Natural killer cell (primary cell): ENCODE measurements at regions of chr2 and their contacts with region 1.

Region 1: DNA sequence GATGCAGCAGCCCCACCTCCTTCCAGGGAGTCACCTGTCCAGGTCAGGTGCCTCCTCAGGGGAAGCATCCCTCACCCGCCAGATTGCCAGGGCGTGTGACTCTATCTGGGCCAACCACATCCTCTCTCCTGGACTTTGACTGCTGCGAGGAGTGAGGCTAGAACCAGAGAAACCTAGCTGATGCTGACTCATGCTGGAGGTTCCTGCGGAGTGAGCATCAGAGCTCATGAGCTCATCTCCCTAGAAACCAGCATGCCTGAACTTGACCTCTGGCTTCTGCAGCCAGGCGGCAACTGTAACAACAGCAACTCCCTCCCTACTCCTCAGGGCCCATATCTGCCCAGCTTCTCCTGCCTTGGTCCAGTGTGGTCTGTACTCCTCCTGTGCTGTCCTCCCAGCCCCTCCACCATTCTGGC is 28.3 kb upstream of the NT5DC4 start:
- DNase-seq: peak; percentile 44 to 66
- ATAC-seq: peak; percentile 61 to 87 (median 76)
- H3K4me3 ChIP-seq: no peak overlapping the region
- H3K4me3 Mint-ChIP-seq: peak overlapping the region; percentile 35
- H3K27ac ChIP-seq: no peak overlapping the region
- H3K27ac Mint-ChIP-seq: peak overlapping the region; percentile 71 to 89
- H3K4me1 ChIP-seq: peaks cover 27% of the 10 kb centered on the region
- H3K4me1 Mint-ChIP-seq: peaks cover 37% of the 10 kb centered on the region in 2 donors
- H3K27me3 ChIP-seq: no peaks in the 10 kb centered on the region
- H3K27me3 Mint-ChIP-seq: no peaks in the 10 kb centered on the region
- CTCF ChIP-seq: no peak

Region 2: GRCh38 chr2:112626604-112627059 is 65.9 kb before region 1 on chr2:
- intact Hi-C with region 1: loop called (anchors 1 kb)
- DNase-seq: peak; percentile 58 to 84
- ATAC-seq: peak; percentile 35 to 59 (median 51)
- H3K4me3 ChIP-seq: no peak overlapping the region
- H3K4me3 Mint-ChIP-seq: peak overlapping the region; percentile 78
- H3K27ac ChIP-seq: peak overlapping the region; percentile 59
- H3K27ac Mint-ChIP-seq: peak overlapping the region; percentile 90 to 94
- H3K4me1 ChIP-seq: peaks cover 82% of the 10 kb centered on the region
- H3K4me1 Mint-ChIP-seq: peaks cover 80 to 82% of the 10 kb centered on the region in 2 donors
- H3K27me3 ChIP-seq: no peaks in the 10 kb centered on the region
- H3K27me3 Mint-ChIP-seq: no peaks in the 10 kb centered on the region
- CTCF ChIP-seq: peak; percentile 82

Region 3: DNA sequence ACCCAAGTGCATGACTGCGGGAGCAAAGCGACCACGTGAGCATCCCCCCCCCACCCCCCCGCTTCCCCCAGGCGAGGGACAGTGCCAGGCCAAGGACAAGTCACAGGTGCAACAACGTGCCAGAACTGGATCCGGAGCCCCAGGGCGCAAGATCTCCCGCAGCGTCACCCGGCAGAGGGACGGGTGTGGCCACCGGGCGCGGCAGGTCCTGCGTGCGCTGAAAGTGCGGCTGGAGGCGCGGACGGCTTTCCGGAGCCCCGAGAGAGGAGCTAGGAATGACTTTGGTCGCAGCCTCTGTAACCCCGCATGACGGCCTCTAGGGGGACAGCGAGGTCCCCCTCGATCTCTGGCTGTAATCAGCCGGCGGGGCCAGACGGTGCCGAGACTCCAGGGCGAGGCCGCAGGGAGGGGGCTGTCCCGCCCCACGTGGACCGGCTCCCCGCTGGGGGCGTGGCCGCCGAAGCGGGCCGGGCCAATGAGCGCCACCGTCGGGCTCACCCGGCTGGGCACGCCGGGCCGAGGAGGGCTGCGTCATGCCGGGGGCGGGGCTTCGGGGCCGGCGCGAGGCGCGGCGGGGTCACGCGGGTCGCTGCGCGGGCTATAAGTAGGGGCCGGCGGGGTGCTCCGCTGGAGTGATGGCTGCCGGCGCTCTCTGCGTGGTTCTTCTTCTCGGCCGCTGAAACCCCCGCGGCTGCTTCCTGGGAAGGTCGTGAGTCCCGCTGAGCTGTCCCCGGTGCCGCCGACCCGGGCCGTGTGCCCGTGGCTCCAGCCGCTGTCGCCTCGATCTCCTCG is 47.0 kb before region 1 on chr2 and contains the start of gene SLC20A1:
- intact Hi-C with region 1: loop called (anchors 5 kb)
- DNase-seq: peak; percentile 98 to 99
- ATAC-seq: peak; percentile 91 to 99 (median 91)
- H3K4me3 ChIP-seq: peak within 1 kb of the TSS; percentile 95
- H3K4me3 Mint-ChIP-seq: peak within 1 kb of the TSS; percentile 94
- H3K27ac ChIP-seq: peak within 1 kb of the TSS; percentile 90
- H3K27ac Mint-ChIP-seq: peak within 1 kb of the TSS; percentile 89 to 91
- H3K4me1 ChIP-seq: peaks cover 41% of the 10 kb centered on the region
- H3K4me1 Mint-ChIP-seq: peaks cover 77 to 80% of the 10 kb centered on the region in 2 donors
- H3K27me3 ChIP-seq: no peaks in the 10 kb centered on the region
- H3K27me3 Mint-ChIP-seq: no peaks in the 10 kb centered on the region
- CTCF ChIP-seq: peak; percentile 59
- total RNA-seq, gene SLC20A1: 193 to 241 (median 233) TPM

Region 4: DNA sequence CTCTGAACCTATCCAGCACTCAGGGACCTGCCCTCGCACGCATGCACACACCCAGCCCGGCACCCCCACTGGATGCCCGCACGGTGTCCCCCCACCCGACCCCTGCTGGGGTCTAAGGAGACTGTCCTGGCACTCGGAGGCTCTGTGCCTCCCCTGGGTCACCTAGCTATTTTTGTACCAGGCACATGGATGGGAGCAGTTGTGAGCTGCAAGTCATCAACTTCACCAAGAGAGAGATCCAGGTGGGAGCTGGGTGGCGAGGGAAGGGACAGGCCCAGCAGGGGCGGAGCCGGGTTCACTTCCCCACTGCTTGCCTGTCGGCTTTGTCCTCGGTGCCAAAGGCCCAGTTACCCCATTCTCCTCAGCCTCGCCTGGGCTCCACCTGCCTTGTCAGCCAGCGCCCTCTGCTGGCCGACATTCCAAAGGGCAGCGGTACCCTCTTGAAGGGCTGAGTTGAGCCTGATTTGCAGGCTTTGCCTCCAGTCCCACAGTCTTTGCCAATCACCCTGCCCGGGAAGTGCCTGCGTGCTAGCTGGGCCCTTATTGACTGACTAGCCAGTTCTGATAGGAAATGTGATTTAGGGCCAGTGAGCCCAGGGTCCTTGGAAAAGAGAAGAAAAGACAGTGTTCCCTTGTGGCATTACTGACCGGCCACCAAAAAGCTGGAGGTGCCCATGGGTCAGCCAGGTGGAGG is 34.1 kb after region 1 on chr2:
- intact Hi-C with region 1: loop called (anchors 1 kb)
- DNase-seq: peak; percentile 85 to 93
- ATAC-seq: peak; percentile 96 to 100 (median 99)
- H3K4me3 ChIP-seq: no peak overlapping the region
- H3K4me3 Mint-ChIP-seq: no peak overlapping the region
- H3K27ac ChIP-seq: no peak overlapping the region
- H3K27ac Mint-ChIP-seq: peak overlapping the region in 1 of 2 donors; percentile 64
- H3K4me1 ChIP-seq: peaks cover 18% of the 10 kb centered on the region
- H3K4me1 Mint-ChIP-seq: peaks cover 9 to 21% of the 10 kb centered on the region in 2 donors
- H3K27me3 ChIP-seq: no peaks in the 10 kb centered on the region
- H3K27me3 Mint-ChIP-seq: no peaks in the 10 kb centered on the region
- CTCF ChIP-seq: peak; percentile 97

Region 5: GRCh38 chr2:112881217-112881985 is 188.9 kb after region 1 on chr2:
- intact Hi-C with region 1: no loop called
- DNase-seq: no peak
- ATAC-seq: peak; percentile 43 to 56 (median 53)
- H3K4me3 ChIP-seq: no peak overlapping the region
- H3K4me3 Mint-ChIP-seq: peak overlapping the region; percentile 59
- H3K27ac ChIP-seq: peak overlapping the region; percentile 68
- H3K27ac Mint-ChIP-seq: peak overlapping the region; percentile 85 to 87
- H3K4me1 ChIP-seq: peaks cover 31% of the 10 kb centered on the region
- H3K4me1 Mint-ChIP-seq: peaks cover 46 to 48% of the 10 kb centered on the region in 2 donors
- H3K27me3 ChIP-seq: no peaks in the 10 kb centered on the region
- H3K27me3 Mint-ChIP-seq: peaks cover 0 to 3% of the 10 kb centered on the region in 2 donors
- CTCF ChIP-seq: no peak

Region 6: GRCh38 chr2:113068718-113069435 is 376.4 kb after region 1 on chr2:
- intact Hi-C with region 1: no loop called
- DNase-seq: no peak
- ATAC-seq: no peak
- H3K4me3 ChIP-seq: no peak overlapping the region
- H3K4me3 Mint-ChIP-seq: no peak overlapping the region
- H3K27ac ChIP-seq: no peak overlapping the region
- H3K27ac Mint-ChIP-seq: no peak overlapping the region
- H3K4me1 ChIP-seq: no peaks in the 10 kb centered on the region
- H3K4me1 Mint-ChIP-seq: no peaks in the 10 kb centered on the region
- H3K27me3 ChIP-seq: no peaks in the 10 kb centered on the region
- H3K27me3 Mint-ChIP-seq: peaks cover 9 to 18% of the 10 kb centered on the region in 2 donors
- CTCF ChIP-seq: no peak